ENCODE measurements at regions of chr6 and their contacts with region 1.

Region 1: DNA sequence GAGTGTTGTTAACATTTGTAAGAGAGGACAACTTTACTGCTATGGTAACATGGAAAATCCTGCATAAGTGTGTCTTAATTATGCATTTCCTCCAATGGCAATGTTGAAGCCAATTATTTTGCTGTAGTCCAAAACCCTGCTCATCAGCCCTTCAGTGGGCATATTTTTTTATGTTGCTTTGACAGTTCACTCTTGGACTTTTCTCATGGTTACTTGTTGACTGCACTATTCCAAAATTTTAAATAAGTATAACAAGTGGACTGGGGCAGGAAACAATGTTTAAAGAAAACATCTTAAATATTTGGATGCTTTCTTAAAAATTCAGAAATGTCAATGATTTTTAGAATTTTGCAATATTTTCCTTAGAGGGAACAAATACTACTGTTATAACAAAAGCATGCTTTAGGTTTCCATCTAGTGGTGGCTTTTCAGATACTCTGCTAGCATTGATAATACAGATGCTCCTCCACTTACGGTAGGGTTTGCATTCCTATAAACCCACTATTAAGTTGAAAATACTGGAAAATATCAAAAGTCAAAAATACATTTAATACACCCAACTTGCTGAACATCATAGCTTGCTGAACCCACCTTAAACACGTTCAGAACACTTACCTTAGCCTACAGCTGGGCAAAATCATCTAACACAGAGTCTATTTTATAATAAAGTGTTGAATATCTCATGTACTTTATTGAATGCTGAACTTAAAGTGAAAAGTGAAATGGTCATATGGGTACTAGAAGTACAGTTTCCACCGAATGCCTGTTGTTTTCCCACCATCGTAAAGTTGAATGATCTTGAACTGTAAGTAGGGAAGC is 86.4 kb downstream of the ADGRG6 start:
- DNase-seq: no peak
- ATAC-seq: no peak
- H3K4me3 ChIP-seq: no peak overlapping the region
- H3K27ac ChIP-seq: no peak overlapping the region
- H3K4me1 ChIP-seq: no peaks in the 10 kb centered on the region
- H3K27me3 ChIP-seq: no peaks in the 10 kb centered on the region
- CTCF ChIP-seq: peak in 2 of 5 experiments; percentile 42 to 45
- POLR2A ChIP-seq: no peak

Region 2: GRCh38 chr6:142146828-142147662 is 241.2 kb before region 1 on chr6 and contains the starts of genes NMBR and VTA1:
- in situ Hi-C with region 1: loop called (anchors 10 to 25 kb)
- intact Hi-C with region 1: loop called (anchors 5 kb)
- DNase-seq: peak; percentile 96 to 97
- ATAC-seq: peak; percentile 99
- H3K4me3 ChIP-seq: peak within 1 kb of the TSS; percentile 80 to 85 (median 83)
- H3K27ac ChIP-seq: peak within 1 kb of the TSS; percentile 55 to 79 (median 70)
- H3K4me1 ChIP-seq: peaks cover 23 to 29% of the 10 kb centered on the region in 2 donors
- H3K27me3 ChIP-seq: no peaks in the 10 kb centered on the region
- CTCF ChIP-seq: peak; percentile 79 to 95 (median 88)
- POLR2A ChIP-seq: peak; percentile 10 to 39
- total RNA-seq, gene NMBR: 0.23 TPM in 1 of 4 donors, not detected in the others
- total RNA-seq, gene VTA1: 74.4 to 89.3 (median 77.3) TPM

Region 3: DNA sequence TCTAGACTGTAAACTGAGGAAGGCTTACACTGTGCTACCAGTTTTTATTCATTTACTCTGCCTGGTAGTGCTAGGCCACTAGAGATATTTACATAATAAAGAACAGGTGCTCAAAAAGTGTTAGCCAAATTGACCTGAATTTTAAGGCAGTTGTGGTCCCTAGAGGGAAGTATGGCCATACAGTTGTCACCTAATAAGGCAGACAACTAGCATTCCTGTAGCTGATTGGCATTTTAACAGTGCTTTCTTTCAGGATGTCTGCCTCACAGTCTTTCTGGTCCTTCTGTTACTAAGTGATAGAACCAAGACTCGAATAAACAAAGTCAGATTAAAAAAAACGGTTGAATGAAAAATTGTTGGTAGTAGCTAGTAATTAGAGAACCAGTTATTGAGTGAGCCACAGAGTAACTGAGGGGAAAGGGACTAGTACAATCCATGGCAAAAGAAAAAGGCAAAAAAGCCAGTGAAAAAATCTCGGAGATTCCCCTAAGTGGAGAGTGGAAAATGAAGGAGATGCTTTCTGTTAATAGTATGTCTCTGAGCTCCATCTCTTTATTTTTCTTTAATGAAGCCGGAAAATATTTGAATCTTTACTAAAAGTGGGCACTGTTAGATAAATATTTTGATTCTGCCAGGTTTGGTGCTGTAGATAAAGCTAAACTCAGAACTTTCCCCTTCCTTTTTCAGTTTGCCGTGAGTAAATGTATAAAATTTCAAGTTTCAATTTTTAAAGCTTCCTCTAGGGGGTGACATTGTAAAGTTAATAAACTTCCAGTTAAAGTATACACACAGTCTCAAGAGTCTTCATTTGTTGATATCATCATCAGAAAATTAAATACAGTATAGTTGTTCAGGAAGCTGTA is 232.1 kb before region 1 on chr6:
- in situ Hi-C with region 1: loop called in 1 of 4 experiments (anchors 25 kb)
- intact Hi-C with region 1: no loop called
- DNase-seq: no peak
- ATAC-seq: no peak
- H3K4me3 ChIP-seq: no peak overlapping the region
- H3K27ac ChIP-seq: no peak overlapping the region
- H3K4me1 ChIP-seq: peaks cover 9 to 12% of the 10 kb centered on the region in 2 donors
- H3K27me3 ChIP-seq: no peaks in the 10 kb centered on the region
- CTCF ChIP-seq: peak in 3 of 5 experiments; percentile 12 to 31 (median 13)
- POLR2A ChIP-seq: no peak

Measured in gastrocnemius medialis (tissue), 4 donors.